ENCODE measurements at regions of chr16 and their contacts with region 1.

Region 1: GRCh38 chr16:66947302-66948065 is 12.2 kb downstream of the CES2 start:
- DNase-seq: peak; percentile 59 to 94
- H3K4me3 ChIP-seq: peak overlapping the region; percentile 23 to 53 (median 27); a peak in 6 of 8 replicates
- H3K27ac ChIP-seq: no peak overlapping the region
- H3K4me1 ChIP-seq: peaks cover 0 to 5% (median 1%) of the 10 kb centered on the region in 4 experiments; a peak in 2 of 7 replicates
- H3K27me3 ChIP-seq: peaks cover 10 to 34% (median 32%) of the 10 kb centered on the region in 4 experiments
- CTCF ChIP-seq: peak; percentile 54 to 93 (median 74)
- EP300 ChIP-seq: no peak
- POLR2A ChIP-seq: no peak
- RAD21 ChIP-seq: peak; percentile 76 to 81

Region 2: DNA sequence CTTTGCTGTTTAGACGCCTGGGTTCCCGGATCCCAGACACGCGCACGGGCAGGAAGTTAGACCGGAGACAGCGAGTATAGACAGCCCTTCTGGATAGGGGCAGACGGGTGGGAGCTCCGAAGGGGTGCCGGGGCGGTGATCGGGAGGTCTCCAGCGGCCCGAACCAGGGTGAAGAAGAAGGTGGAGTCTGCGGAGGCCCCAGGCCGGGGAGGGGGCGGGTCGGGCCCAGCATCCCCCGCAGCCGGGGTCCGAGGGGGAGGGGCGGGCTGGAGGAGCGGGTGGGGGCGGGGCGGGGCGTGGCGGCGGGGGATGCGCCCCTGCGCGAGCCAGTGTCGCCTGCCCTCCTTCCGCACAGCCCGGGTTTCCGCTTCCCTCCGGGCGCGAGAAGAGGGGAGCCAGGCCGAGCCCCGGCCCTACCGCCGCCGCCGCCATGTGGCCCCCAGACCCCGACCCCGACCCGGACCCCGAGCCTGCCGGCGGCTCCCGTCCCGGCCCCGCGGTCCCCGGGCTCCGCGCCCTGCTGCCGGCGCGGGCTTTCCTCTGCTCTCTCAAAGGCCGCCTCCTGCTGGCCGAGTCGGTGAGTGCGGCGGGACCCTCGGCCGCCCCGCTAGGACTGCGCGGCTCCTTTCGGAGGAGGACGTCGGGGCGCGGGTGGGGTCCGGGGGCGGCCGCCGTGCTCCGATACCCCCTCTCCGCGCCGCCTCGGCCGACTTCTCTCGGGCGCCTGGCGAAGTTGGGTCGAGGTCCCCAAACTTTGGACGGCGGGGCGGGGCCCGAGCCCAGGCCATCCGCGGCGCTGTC is 342.9 kb before region 1 on chr16 and contains the start of gene CMTM3:
- CTCF ChIA-PET with region 1: no interaction called
- POLR2A ChIA-PET with region 1: no interaction called
- DNase-seq: peak in 1 of 2 experiments; percentile 92
- H3K4me3 ChIP-seq: peak within 1 kb of the TSS; percentile 53 to 96 (median 68)
- H3K27ac ChIP-seq: peak within 1 kb of the TSS; percentile 66; the same call in 1 of the 2 replicates
- H3K4me1 ChIP-seq: peaks cover 0 to 27% (median 13%) of the 10 kb centered on the region in 4 experiments; a peak in 6 of 7 replicates
- H3K27me3 ChIP-seq: no peaks in the 10 kb centered on the region
- CTCF ChIP-seq: peak; percentile 46 to 82 (median 71)
- EP300 ChIP-seq: peak in 1 of 2 experiments; percentile 7; a peak in 1 of 3 replicates
- POLR2A ChIP-seq: peak in 1 of 2 experiments; percentile 73; a peak in 1 of 3 replicates
- RAD21 ChIP-seq: peak; percentile 38 to 60
- total RNA-seq, gene CMTM3: 24.8 and 25.4 TPM in 2 replicates

Region 3: GRCh38 chr16:66830422-66831404 is 116.8 kb before region 1 on chr16 and contains the start of gene NAE1:
- CTCF ChIA-PET with region 1: no interaction called
- POLR2A ChIA-PET with region 1: no interaction called
- DNase-seq: peak; percentile 79 to 95
- H3K4me3 ChIP-seq: peak within 1 kb of the TSS; percentile 66 to 86 (median 84)
- H3K27ac ChIP-seq: peak within 1 kb of the TSS; percentile 93
- H3K4me1 ChIP-seq: peaks cover 0 to 5% (median 3%) of the 10 kb centered on the region in 4 experiments; a peak in 2 of 7 replicates
- H3K27me3 ChIP-seq: no peaks in the 10 kb centered on the region; a peak in 2 of 7 replicates
- CTCF ChIP-seq: peak; percentile 97 to 99 (median 98)
- EP300 ChIP-seq: peak in 1 of 2 experiments; percentile 28; a peak in 1 of 3 replicates
- POLR2A ChIP-seq: peak; percentile 91 to 95
- RAD21 ChIP-seq: peak; percentile 69 to 73
- total RNA-seq, gene NAE1: 145 and 155 TPM in 2 replicates

Region 4: DNA sequence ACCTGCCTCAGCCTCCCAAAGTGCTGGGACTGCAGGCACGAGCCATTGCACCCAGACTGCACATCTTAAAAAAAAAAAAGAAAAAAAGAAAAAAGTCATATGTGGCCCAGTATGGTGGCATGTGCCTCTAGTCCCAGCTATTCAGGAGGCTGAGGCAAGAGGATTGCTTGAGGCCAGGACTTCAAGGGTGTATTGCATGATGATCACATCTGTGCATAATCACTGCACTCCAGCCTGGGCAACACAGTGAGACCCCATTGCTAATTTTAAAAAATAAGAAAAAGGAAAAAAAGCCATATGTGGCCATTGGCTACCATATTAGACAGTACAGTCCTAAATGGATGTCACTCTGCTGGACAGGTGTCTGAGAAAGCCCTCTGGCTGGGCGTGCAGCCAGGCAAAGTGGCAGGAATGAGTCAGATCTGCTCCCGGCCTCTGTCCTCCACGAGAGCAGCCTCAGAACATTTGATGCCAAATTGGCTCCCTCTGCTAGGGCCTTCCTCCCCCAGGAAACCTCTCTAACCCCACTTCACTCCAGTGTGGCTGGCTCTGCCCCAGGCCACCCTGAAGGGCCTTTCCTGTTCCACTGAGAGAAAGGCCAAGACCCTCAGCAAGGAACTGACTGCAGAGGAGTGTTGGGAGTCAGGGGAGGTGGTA is 88.6 kb before region 1 on chr16:
- CTCF ChIA-PET with region 1: no interaction called
- POLR2A ChIA-PET with region 1: no interaction called
- DNase-seq: no peak
- H3K4me3 ChIP-seq: no peak overlapping the region
- H3K27ac ChIP-seq: no peak overlapping the region
- H3K4me1 ChIP-seq: no peaks in the 10 kb centered on the region
- H3K27me3 ChIP-seq: no peaks in the 10 kb centered on the region
- CTCF ChIP-seq: no peak
- EP300 ChIP-seq: no peak
- POLR2A ChIP-seq: no peak
- RAD21 ChIP-seq: no peak

Region 5: DNA sequence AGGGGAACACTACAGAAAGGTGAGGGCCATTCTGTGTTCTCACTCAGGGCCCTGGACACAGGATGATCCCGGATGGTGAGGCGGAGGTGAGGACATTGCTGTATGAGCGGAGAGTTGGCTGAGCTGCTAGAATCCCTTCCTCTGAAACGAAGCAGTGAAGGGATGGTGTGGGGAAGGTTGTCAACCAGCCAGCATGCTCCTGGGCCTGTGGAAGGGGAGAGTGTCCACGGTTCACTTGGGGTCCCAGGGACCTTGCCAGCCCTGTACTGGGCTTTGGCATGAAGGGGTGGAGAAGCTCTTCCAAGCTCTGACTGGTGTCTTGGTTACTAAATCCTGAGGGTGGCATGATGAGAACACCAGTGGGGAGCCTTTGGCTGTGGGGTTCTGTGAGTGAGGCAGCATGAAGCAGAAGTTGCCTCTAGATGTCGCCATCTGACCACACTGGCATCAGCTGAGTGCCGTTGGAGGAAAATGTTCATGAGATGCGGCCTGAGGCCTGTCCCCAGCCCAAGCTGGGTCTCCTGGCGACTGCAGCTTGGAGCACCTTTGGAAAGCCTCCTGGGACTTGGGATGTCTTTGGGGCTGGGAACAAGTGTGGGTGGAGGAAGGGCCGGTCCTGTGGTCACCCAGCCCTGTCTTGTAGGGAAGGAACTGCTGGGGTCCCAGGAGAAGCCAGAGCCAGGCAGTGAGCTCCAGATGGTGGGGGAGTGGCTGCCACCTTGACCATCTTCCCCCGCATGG is 52.4 kb before region 1 on chr16:
- CTCF ChIA-PET with region 1: interaction called, 18 read pairs
- POLR2A ChIA-PET with region 1: no interaction called
- DNase-seq: peak in 1 of 2 experiments; percentile 72
- H3K4me3 ChIP-seq: no peak overlapping the region
- H3K27ac ChIP-seq: no peak overlapping the region
- H3K4me1 ChIP-seq: peaks cover 0 to 3% (median 1%) of the 10 kb centered on the region in 4 experiments; a peak in 3 of 7 replicates
- H3K27me3 ChIP-seq: no peaks in the 10 kb centered on the region; a peak in 1 of 7 replicates
- CTCF ChIP-seq: peak; percentile 85 to 91 (median 91)
- EP300 ChIP-seq: no peak
- POLR2A ChIP-seq: no peak
- RAD21 ChIP-seq: peak; percentile 95 to 96

Region 6: DNA sequence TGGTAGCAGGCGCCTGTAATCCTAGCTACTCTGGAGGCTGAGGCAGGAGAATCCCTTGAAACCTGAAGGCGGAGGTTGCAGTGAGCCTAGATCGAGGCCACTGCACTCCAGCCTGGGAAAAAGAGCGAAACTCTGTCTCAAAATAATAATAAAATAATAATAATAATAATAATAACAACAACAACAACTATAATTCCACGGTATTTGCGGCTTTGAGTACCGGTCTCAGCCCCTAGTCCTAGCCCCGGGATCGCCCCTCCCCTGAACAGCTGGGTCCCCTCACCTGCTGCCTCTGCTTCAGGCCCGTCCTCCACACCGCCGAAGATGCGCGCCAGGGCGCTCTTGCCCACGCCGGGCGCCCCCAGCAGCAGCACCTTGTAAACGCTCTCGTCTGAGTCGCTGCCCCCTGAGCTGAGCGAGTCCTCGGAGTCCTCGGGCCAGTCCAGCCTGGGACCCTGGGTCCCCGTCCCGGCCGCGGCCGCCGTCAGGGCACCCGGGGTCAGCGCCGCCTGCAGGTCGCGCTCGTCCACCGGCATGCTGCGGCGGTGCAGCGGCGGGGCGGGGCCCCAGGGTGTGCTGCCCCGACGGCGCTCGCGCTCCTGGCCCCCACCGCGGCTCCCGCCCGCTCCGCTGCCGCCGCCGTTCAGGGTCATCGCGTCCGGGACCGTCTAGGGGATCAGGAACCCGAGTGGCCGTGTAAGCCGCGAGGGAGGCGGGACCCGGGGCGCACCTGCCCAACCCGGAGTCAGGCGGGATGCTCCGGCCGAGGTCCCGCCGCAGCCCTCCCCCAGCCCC is 22.8 kb before region 1 on chr16:
- CTCF ChIA-PET with region 1: interaction called, 11 read pairs
- POLR2A ChIA-PET with region 1: interaction called, 6 read pairs
- DNase-seq: peak in 1 of 2 experiments; percentile 88
- H3K4me3 ChIP-seq: peak overlapping the region; percentile 28 to 67 (median 40)
- H3K27ac ChIP-seq: no peak overlapping the region
- H3K4me1 ChIP-seq: peaks cover 0 to 8% (median under 1%) of the 10 kb centered on the region in 4 experiments; a peak in 4 of 7 replicates
- H3K27me3 ChIP-seq: peaks cover 14 to 45% (median 37%) of the 10 kb centered on the region in 4 experiments; a peak in 6 of 7 replicates
- CTCF ChIP-seq: peak; percentile 66 to 83 (median 82)
- EP300 ChIP-seq: peak in 1 of 2 experiments; percentile 21; a peak in 1 of 3 replicates
- POLR2A ChIP-seq: no peak
- RAD21 ChIP-seq: peak in 1 of 2 experiments; percentile 61; a peak in 3 of 4 replicates

Region 7: DNA sequence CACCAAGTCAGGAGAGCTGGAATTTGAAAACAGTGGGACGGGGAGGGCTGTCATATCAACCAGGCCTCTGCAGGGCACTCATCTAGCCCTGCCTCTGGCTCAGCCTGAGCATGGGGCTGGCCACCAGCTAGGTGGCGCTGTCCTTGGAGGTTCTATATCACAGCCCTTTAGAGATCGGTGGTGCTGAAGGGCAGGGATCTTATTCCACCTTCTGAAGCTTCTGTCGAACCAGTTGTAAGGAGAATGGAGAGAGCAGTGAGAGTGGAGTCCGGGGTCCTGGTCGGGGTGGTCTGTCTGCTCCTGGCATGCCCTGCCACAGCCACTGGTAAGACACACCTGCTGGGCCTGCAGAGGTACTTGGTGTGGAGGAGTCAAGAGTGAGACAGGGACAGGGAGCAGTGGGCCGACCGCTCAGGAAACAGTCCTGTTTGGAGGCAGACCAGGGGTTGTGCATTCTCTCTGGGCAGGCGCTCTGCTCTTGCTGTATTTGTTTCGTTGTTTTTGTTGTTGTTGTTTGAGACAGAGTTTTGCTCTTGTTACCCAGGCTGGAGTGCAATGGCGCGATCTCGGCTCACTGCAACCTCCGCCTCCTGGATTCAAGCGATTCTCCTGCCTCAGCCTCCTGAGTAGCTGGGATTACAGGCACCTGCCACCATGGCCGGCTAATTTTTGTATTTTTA is 13.7 kb after region 1 on chr16 and contains the start of gene CES3:
- CTCF ChIA-PET with region 1: interaction called, 18 read pairs
- POLR2A ChIA-PET with region 1: no interaction called
- DNase-seq: peak; percentile 79 to 87
- H3K4me3 ChIP-seq: peak within 1 kb of the TSS; percentile 8 to 50 (median 24); a peak in 6 of 8 replicates
- H3K27ac ChIP-seq: no peak within 1 kb of the TSS
- H3K4me1 ChIP-seq: peaks cover 0 to 3% (median under 1%) of the 10 kb centered on the region in 4 experiments; a peak in 3 of 7 replicates
- H3K27me3 ChIP-seq: no peaks in the 10 kb centered on the region
- CTCF ChIP-seq: peak; percentile 97 to 99 (median 99)
- EP300 ChIP-seq: no peak
- POLR2A ChIP-seq: peak in 1 of 2 experiments; percentile 37; a peak in 1 of 3 replicates
- RAD21 ChIP-seq: peak; percentile 33 to 48; a peak in 3 of 4 replicates
- total RNA-seq, gene CES3: 1.6 and 1.7 TPM in 2 replicates